ENCODE measurements at regions of chr15 and their contacts with region 1.

Region 1: GRCh38 chr15:41774062-41774881 is at the start of gene MAPKBP1:
- DNase-seq: peak; percentile 98
- ATAC-seq: peak; percentile 92
- H3K4me3 Mint-ChIP-seq: peak within 1 kb of the TSS; percentile 93
- H3K27ac Mint-ChIP-seq: peak within 1 kb of the TSS; percentile 94
- H3K4me1 Mint-ChIP-seq: peaks cover 56% of the 10 kb centered on the region
- H3K27me3 Mint-ChIP-seq: no peaks in the 10 kb centered on the region
- CTCF ChIP-seq: no peak
- total RNA-seq, gene MAPKBP1: 31.3 and 42.3 TPM in 2 replicates

Region 2: DNA sequence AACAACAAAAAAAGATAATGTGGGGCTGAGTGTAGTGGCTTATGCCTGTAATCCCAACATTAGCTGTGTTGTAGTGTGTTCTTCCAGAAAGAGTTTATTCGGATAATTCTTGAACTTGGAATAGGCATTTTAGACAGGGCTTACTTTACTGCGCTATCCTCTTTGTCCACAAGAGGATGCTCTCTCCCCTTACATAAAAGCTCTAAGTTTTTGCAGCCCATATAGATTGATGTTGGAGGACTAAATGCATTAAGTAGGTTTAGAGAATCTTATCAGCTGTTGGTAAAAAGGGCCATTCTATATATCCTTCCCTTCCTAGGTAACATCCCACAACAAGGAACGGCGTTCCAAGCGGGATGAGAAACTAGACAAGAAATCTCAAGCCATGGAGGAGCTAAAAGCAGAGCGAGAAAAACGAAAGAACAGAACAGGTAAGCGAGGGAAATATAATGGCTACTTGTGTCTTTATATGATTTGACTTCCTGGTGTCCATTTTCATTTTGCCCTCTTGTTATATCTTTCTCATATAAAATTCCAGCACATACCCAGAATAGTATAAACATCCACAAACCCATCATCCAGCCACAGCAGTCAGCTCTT is 308.4 kb before region 1 on chr15:
- CTCF ChIA-PET with region 1: interaction called, 15 read pairs
- POLR2A ChIA-PET with region 1: no interaction called
- intact Hi-C with region 1: loop called (anchors 1 kb)
- DNase-seq: no peak
- ATAC-seq: peak; percentile 50
- H3K4me3 Mint-ChIP-seq: no peak overlapping the region
- H3K27ac Mint-ChIP-seq: no peak overlapping the region
- H3K4me1 Mint-ChIP-seq: peaks cover 5% of the 10 kb centered on the region
- H3K27me3 Mint-ChIP-seq: no peaks in the 10 kb centered on the region
- CTCF ChIP-seq: no peak

Region 3: GRCh38 chr15:41695750-41696426 is 78.4 kb before region 1 on chr15:
- CTCF ChIA-PET with region 1: interaction called, 5 read pairs
- POLR2A ChIA-PET with region 1: interaction called, 5 read pairs
- intact Hi-C with region 1: loop called (anchors 5 kb)
- DNase-seq: no peak
- ATAC-seq: peak; percentile 98
- H3K4me3 Mint-ChIP-seq: peak overlapping the region; percentile 35
- H3K27ac Mint-ChIP-seq: peak overlapping the region; percentile 76
- H3K4me1 Mint-ChIP-seq: peaks cover 45% of the 10 kb centered on the region
- H3K27me3 Mint-ChIP-seq: no peaks in the 10 kb centered on the region
- CTCF ChIP-seq: no peak

Region 4: GRCh38 chr15:41811432-41812195 is 37.3 kb after region 1 on chr15:
- CTCF ChIA-PET with region 1: interaction called, 309 read pairs
- POLR2A ChIA-PET with region 1: interaction called, 49 read pairs
- intact Hi-C with region 1: loop called (anchors 1 kb)
- DNase-seq: peak; percentile 67
- ATAC-seq: peak; percentile 97
- H3K4me3 Mint-ChIP-seq: no peak overlapping the region
- H3K27ac Mint-ChIP-seq: no peak overlapping the region
- H3K4me1 Mint-ChIP-seq: peaks cover 11% of the 10 kb centered on the region
- H3K27me3 Mint-ChIP-seq: no peaks in the 10 kb centered on the region
- CTCF ChIP-seq: peak; percentile 85

Region 5: DNA sequence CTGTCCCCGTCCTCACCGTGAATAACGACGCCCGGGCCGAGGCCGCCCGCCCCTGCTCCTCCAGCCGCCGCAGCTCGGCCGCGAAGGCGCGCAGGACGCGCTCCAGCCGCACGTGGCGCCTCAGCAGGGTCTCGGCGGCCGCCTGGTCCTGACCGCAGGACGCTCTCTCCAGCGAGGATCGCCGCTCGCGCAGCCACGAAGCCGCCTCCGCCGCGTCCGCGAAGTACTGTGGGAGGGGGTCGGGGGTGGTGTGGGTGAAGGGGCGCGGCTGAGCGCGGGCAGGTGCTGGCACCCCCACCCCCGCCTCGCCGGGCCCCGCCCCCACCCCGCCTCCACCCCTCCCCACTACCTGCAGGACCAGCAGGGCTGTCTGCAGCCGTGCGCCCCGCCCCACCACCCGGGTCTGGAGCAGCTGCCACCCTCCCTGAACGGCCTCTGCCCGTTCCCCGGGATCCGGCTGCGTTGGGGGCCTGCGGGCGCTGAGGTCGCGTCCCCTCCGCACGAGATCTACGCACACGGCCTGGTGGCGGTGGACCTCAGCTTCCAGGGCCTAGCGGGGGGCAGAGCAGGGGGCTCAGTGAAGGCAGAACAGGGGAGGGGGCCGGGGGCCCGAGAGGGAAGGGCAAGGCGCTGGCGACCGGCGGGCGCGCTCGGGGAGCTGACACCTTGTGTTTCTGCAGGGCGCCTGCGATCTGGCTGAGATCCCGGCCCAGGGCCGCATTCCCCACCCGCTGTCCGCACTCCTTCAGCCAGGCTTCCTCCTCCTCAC is 107.8 kb after region 1 on chr15:
- CTCF ChIA-PET with region 1: no interaction called
- POLR2A ChIA-PET with region 1: no interaction called
- intact Hi-C with region 1: no loop called
- DNase-seq: no peak
- ATAC-seq: no peak
- H3K4me3 Mint-ChIP-seq: no peak overlapping the region
- H3K27ac Mint-ChIP-seq: no peak overlapping the region
- H3K4me1 Mint-ChIP-seq: peaks cover 11% of the 10 kb centered on the region
- H3K27me3 Mint-ChIP-seq: peaks cover 16% of the 10 kb centered on the region
- CTCF ChIP-seq: no peak

Region 6: GRCh38 chr15:41904541-41905005 is 130.3 kb after region 1 on chr15:
- CTCF ChIA-PET with region 1: interaction called, 108 read pairs
- POLR2A ChIA-PET with region 1: interaction called, 6 read pairs
- intact Hi-C with region 1: loop called (anchors 1 kb)
- DNase-seq: peak; percentile 57
- ATAC-seq: peak; percentile 93
- H3K4me3 Mint-ChIP-seq: no peak overlapping the region
- H3K27ac Mint-ChIP-seq: peak overlapping the region; percentile 11
- H3K4me1 Mint-ChIP-seq: peaks cover 6% of the 10 kb centered on the region
- H3K27me3 Mint-ChIP-seq: no peaks in the 10 kb centered on the region
- CTCF ChIP-seq: peak; percentile 69

Region 7: GRCh38 chr15:41989259-41989933 is 215.1 kb after region 1 on chr15:
- CTCF ChIA-PET with region 1: interaction called, 9 read pairs
- POLR2A ChIA-PET with region 1: no interaction called
- intact Hi-C with region 1: loop called (anchors 5 kb)
- DNase-seq: peak; percentile 83
- ATAC-seq: peak; percentile 100
- H3K4me3 Mint-ChIP-seq: no peak overlapping the region
- H3K27ac Mint-ChIP-seq: no peak overlapping the region
- H3K4me1 Mint-ChIP-seq: no peaks in the 10 kb centered on the region
- H3K27me3 Mint-ChIP-seq: peaks cover 6% of the 10 kb centered on the region
- CTCF ChIP-seq: peak; percentile 85

Region 8: GRCh38 chr15:42118650-42119445 is 344.6 kb after region 1 on chr15:
- CTCF ChIA-PET with region 1: no interaction called
- POLR2A ChIA-PET with region 1: no interaction called
- intact Hi-C with region 1: no loop called
- DNase-seq: no peak
- ATAC-seq: no peak
- H3K4me3 Mint-ChIP-seq: no peak overlapping the region
- H3K27ac Mint-ChIP-seq: no peak overlapping the region
- H3K4me1 Mint-ChIP-seq: no peaks in the 10 kb centered on the region
- H3K27me3 Mint-ChIP-seq: peaks cover 4% of the 10 kb centered on the region
- CTCF ChIP-seq: no peak

Measured in activated B cell treated with CpG ODN at 0.5 μM for 24 hours (primary cell).